ENCODE measurements at regions of chr18 and their contacts with region 1.

Region 1: DNA sequence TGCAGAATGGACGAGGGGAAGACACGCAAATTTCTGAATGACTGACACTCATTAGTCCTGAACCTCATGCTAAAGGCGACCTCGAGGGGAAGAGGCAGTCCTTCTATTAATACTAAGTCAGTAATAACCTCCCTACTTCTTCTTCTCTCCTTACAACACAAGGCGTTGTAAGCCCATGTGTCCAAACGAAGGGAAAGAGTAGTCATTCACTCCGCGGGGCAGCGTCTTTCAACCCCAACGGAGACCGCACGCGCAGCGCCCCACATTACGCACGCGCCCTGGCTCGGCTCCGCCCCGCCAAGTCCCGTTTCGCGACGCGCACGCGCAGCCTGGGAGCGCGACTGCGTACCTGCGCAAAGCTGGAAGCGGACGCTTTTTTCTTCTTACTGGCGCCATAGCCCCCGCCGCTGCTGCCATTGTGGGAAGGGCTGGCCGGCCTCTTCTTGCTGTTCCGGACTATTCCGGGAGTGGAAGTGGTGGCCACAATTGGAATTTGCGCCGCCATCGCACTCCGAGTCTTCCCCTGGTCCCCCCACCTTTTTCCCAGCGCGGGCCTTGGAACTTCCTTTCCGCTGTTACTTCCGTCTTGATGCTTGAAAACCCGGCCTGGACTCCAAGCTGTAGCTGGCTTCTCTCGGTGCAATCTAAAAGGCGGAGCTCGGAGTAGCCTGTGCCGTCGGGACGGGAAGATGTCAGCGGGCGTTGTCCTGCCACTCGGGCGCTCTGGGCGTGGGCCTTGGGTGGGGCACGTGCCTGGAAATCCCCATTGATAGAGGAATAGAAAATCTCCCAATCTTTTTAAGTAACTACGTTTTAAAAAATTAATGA is at the start of gene INO80C:
- DNase-seq: peak; percentile 87 to 94 (median 92)
- ATAC-seq: peak; percentile 93
- H3K4me3 ChIP-seq: peak within 1 kb of the TSS; percentile 96
- H3K4me3 Mint-ChIP-seq: peak within 1 kb of the TSS; percentile 84 to 100 (median 96)
- H3K27ac ChIP-seq: peak within 1 kb of the TSS; percentile 94
- H3K27ac Mint-ChIP-seq: peak within 1 kb of the TSS; percentile 96 to 100 (median 100)
- H3K4me1 ChIP-seq: peaks cover 9 to 12% of the 10 kb centered on the region in 2 donors
- H3K4me1 Mint-ChIP-seq: peaks cover 22 to 62% (median 51%) of the 10 kb centered on the region in 7 donors
- H3K27me3 ChIP-seq: no peaks in the 10 kb centered on the region
- H3K27me3 Mint-ChIP-seq: no peaks in the 10 kb centered on the region
- total RNA-seq, gene INO80C: 20.6 to 26.8 (median 25.7) TPM

Region 2: DNA sequence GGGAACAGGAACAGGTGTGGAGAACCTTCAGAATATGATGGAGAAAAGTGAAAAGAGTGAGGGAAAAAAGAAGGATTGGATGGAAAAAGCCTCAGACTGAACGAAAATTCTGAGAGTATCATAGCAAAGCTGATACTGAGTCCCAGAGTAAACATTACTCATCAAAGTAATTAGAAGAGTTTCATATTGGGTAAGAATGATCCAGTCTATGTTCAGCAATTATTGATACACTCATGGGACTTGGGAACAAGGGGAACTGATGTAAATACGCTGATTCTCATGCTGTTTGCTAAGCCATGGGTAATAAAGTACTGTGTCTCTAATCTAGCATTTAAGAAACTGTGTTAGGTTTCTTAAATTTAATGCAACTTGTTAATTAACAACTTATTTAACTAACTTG is 1053.0 kb before region 1 on chr18:
- CTCF ChIA-PET with region 1: no interaction called
- POLR2A ChIA-PET with region 1: no interaction called
- intact Hi-C with region 1: no loop called
- DNase-seq: no peak
- ATAC-seq: no peak
- H3K4me3 ChIP-seq: no peak overlapping the region
- H3K4me3 Mint-ChIP-seq: no peak overlapping the region
- H3K27ac ChIP-seq: no peak overlapping the region
- H3K27ac Mint-ChIP-seq: no peak overlapping the region
- H3K4me1 ChIP-seq: no peaks in the 10 kb centered on the region
- H3K4me1 Mint-ChIP-seq: no peaks in the 10 kb centered on the region
- H3K27me3 ChIP-seq: no peaks in the 10 kb centered on the region
- H3K27me3 Mint-ChIP-seq: no peaks in the 10 kb centered on the region

Region 3: GRCh38 chr18:34976899-34977837 is 520.4 kb before region 1 on chr18:
- CTCF ChIA-PET with region 1: no interaction called
- POLR2A ChIA-PET with region 1: interaction called, 3 read pairs
- intact Hi-C with region 1: loop called (anchors 1 to 2 kb)
- DNase-seq: peak; percentile 60 to 78 (median 72)
- ATAC-seq: peak; percentile 84
- H3K4me3 ChIP-seq: peak overlapping the region; percentile 74
- H3K4me3 Mint-ChIP-seq: peak overlapping the region; percentile 89 to 99 (median 94)
- H3K27ac ChIP-seq: peak overlapping the region; percentile 54
- H3K27ac Mint-ChIP-seq: peak overlapping the region in 6 of 9 donors; percentile 24 to 72 (median 39)
- H3K4me1 ChIP-seq: no peaks in the 10 kb centered on the region
- H3K4me1 Mint-ChIP-seq: peaks cover 18 to 37% (median 24%) of the 10 kb centered on the region in 7 donors
- H3K27me3 ChIP-seq: peaks cover 0 to 3% of the 10 kb centered on the region in 2 donors
- H3K27me3 Mint-ChIP-seq: peaks cover 0 to 66% (median 0%) of the 10 kb centered on the region in 5 donors

Region 4: GRCh38 chr18:35290073-35290735 is 207.4 kb before region 1 on chr18 and contains the start of gene ZSCAN30:
- CTCF ChIA-PET with region 1: no interaction called
- POLR2A ChIA-PET with region 1: interaction called, 6 read pairs
- intact Hi-C with region 1: loop called (anchors 1 kb)
- DNase-seq: peak; percentile 90 to 96 (median 94)
- ATAC-seq: peak; percentile 99
- H3K4me3 ChIP-seq: peak within 1 kb of the TSS; percentile 90
- H3K4me3 Mint-ChIP-seq: peak within 1 kb of the TSS; percentile 97 to 99 (median 98)
- H3K27ac ChIP-seq: peak within 1 kb of the TSS; percentile 86
- H3K27ac Mint-ChIP-seq: peak within 1 kb of the TSS; percentile 94 to 100 (median 98)
- H3K4me1 ChIP-seq: peaks cover 16 to 18% of the 10 kb centered on the region in 2 donors
- H3K4me1 Mint-ChIP-seq: peaks cover 29 to 86% (median 75%) of the 10 kb centered on the region in 7 donors
- H3K27me3 ChIP-seq: no peaks in the 10 kb centered on the region
- H3K27me3 Mint-ChIP-seq: no peaks in the 10 kb centered on the region
- total RNA-seq, gene ZSCAN30: 14.0 to 23.2 (median 20.8) TPM

Region 5: GRCh38 chr18:35580701-35581539 is 83.3 kb after region 1 on chr18:
- CTCF ChIA-PET with region 1: no interaction called
- POLR2A ChIA-PET with region 1: interaction called, 17 read pairs
- intact Hi-C with region 1: loop called (anchors 1 kb)
- DNase-seq: peak; percentile 54 to 70 (median 63)
- ATAC-seq: peak; percentile 84
- H3K4me3 ChIP-seq: peak overlapping the region; percentile 61
- H3K4me3 Mint-ChIP-seq: peak overlapping the region; percentile 60 to 80 (median 72)
- H3K27ac ChIP-seq: peak overlapping the region; percentile 77
- H3K27ac Mint-ChIP-seq: peak overlapping the region in 5 of 9 donors; percentile 37 to 80 (median 63)
- H3K4me1 ChIP-seq: peaks cover 11% of the 10 kb centered on the region in 2 donors
- H3K4me1 Mint-ChIP-seq: peaks cover 13 to 39% (median 28%) of the 10 kb centered on the region in 7 donors
- H3K27me3 ChIP-seq: no peaks in the 10 kb centered on the region
- H3K27me3 Mint-ChIP-seq: peaks cover 0 to 18% (median 7%) of the 10 kb centered on the region in 5 donors

Region 6: DNA sequence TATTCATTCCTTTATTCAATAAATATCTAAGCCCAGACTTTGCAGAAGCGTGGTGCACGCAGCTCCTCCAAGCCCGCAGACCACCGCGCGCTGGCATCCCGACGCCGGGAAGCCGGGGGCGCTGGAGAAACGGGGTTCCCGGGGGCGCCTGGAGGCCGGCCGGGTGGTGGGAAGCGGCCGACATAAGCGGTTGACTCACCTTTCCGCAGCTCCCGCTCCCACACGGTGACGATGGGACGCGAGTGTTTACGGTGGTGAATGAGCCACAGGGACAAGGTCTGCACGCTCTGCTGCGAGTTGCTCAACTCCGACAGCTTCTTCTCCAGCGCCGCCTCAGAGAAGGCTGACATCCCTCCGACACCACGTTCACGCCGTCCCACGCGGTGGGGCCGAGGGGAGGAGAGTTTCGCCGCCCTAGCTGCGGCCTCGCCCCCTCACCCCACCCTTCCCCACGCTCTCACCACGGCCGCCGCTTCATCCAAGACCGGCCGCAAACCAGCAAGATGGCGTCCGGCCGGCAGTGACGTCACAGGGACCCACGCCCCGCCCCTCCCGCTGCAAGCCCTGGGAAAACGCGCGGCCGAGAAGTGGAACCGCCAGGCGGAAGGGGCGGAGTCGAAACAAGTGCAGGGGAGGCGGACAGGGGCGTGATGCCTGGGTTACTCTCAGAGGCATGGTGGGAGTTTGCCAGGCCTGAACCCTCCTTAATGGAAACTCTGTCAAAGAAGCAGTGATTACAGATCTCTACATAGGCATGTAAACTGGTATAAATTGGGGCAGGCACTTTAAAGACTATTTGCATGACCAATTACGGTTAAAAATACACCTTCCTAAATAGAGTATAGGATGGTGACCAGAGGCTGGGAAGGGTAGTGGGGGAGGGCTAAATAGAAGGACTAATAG is 569.7 kb after region 1 on chr18 and contains the start of gene RPRD1A:
- CTCF ChIA-PET with region 1: no interaction called
- POLR2A ChIA-PET with region 1: interaction called, 3 read pairs
- intact Hi-C with region 1: loop called (anchors 1 kb)
- DNase-seq: peak; percentile 90 to 98 (median 94)
- ATAC-seq: peak; percentile 96
- H3K4me3 ChIP-seq: peak within 1 kb of the TSS; percentile 88
- H3K4me3 Mint-ChIP-seq: peak within 1 kb of the TSS; percentile 92 to 98 (median 96)
- H3K27ac ChIP-seq: peak within 1 kb of the TSS; percentile 79
- H3K27ac Mint-ChIP-seq: peak within 1 kb of the TSS; percentile 85 to 97 (median 94)
- H3K4me1 ChIP-seq: peaks cover 11 to 16% of the 10 kb centered on the region in 2 donors
- H3K4me1 Mint-ChIP-seq: peaks cover 26 to 50% (median 44%) of the 10 kb centered on the region in 7 donors
- H3K27me3 ChIP-seq: no peaks in the 10 kb centered on the region
- H3K27me3 Mint-ChIP-seq: peaks cover 0 to 5% (median 0%) of the 10 kb centered on the region in 5 donors
- total RNA-seq, gene RPRD1A: 22.6 to 51.3 (median 28.7) TPM